Dorsolateral prefrontal cortex (tissue), 120 donors: ENCODE measurements at regions of chr6 and their contacts with region 1.

Region 1: GRCh38 chr6:12222405-12223366 is 67.5 kb upstream of the EDN1 start:
- DNase-seq: no peak
- H3K4me3 ChIP-seq: no peak overlapping the region
- H3K27ac ChIP-seq: no peak overlapping the region
- H3K27me3 ChIP-seq: no peaks in the 10 kb centered on the region
- CTCF ChIP-seq: no peak

Region 2: GRCh38 chr6:12182676-12183075 is 40.0 kb before region 1 on chr6:
- intact Hi-C with region 1: loop called in 1 of 2 experiments (anchors 5 kb)
- DNase-seq: no peak
- H3K4me3 ChIP-seq: no peak overlapping the region
- H3K27ac ChIP-seq: no peak overlapping the region
- H3K27me3 ChIP-seq: no peaks in the 10 kb centered on the region
- CTCF ChIP-seq: no peak